ENCODE measurements at regions of chr3 and their contacts with region 1.

Region 1: DNA sequence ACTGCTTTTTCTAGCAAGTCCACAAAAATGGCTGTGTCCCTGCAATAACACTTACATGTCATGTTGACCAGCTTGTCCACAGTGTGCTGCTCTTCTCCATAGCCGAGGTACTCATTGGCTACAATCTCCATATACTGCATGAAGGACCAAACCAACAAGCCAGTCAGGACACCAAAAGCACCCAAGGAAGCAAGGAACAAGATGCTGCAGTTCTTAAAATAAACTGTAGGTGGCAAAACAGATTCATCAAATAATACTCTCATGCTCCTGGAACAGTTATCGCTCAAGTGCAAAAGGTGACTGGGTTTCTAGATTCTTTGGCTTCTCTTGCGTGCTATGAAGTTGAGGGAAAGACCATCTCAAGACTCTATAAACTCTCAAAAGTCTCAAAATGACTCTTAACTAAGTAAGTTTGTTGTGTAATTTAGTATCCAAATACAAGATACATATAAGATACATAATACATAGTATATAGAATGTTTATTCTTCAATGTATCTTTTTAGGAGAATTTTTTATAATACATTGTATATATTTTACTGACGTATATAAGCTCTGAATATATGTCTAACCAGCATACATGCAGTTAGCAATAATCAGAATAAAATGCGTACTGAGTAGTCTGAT is 57.0 kb downstream of the NEK10 start:
- DNase-seq: peak; percentile 8
- H3K4me3 Mint-ChIP-seq: no peak overlapping the region
- H3K27ac Mint-ChIP-seq: no peak overlapping the region
- H3K4me1 Mint-ChIP-seq: no peaks in the 10 kb centered on the region
- H3K27me3 Mint-ChIP-seq: peaks cover 2% of the 10 kb centered on the region

Region 2: DNA sequence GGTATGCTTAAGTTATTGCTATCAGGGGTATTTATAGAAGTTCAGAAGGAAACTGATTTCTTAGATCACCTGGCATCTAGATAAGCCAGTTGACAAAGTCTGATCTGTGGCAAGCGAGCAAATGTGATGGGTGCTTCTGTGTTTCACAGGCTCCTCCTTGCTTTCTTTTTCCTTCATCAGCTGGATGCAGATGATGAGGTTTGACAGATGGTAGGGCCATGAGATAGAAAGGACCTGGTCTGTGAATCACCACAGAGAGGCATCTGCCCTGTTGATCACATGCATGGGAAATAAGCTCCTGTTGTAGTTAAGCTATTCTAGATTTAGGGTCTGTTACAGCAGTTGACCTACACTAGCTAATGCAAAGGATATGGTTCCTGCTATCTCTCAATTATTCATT is 314.9 kb before region 1 on chr3:
- CTCF ChIA-PET with region 1: no interaction called
- intact Hi-C with region 1: no loop called
- DNase-seq: no peak
- H3K4me3 Mint-ChIP-seq: no peak overlapping the region
- H3K27ac Mint-ChIP-seq: no peak overlapping the region
- H3K4me1 Mint-ChIP-seq: no peaks in the 10 kb centered on the region
- H3K27me3 Mint-ChIP-seq: no peaks in the 10 kb centered on the region

Region 3: GRCh38 chr3:27134165-27134796 is 177.9 kb before region 1 on chr3:
- CTCF ChIA-PET with region 1: no interaction called
- intact Hi-C with region 1: loop called (anchors 10 kb)
- DNase-seq: peak; percentile 70
- H3K4me3 Mint-ChIP-seq: no peak overlapping the region
- H3K27ac Mint-ChIP-seq: no peak overlapping the region
- H3K4me1 Mint-ChIP-seq: no peaks in the 10 kb centered on the region
- H3K27me3 Mint-ChIP-seq: peaks cover 1% of the 10 kb centered on the region

Region 4: GRCh38 chr3:27289769-27290413 is 22.3 kb before region 1 on chr3:
- CTCF ChIA-PET with region 1: no interaction called
- intact Hi-C with region 1: no loop called
- DNase-seq: no peak
- H3K4me3 Mint-ChIP-seq: no peak overlapping the region
- H3K27ac Mint-ChIP-seq: no peak overlapping the region
- H3K4me1 Mint-ChIP-seq: no peaks in the 10 kb centered on the region
- H3K27me3 Mint-ChIP-seq: no peaks in the 10 kb centered on the region

Region 5: DNA sequence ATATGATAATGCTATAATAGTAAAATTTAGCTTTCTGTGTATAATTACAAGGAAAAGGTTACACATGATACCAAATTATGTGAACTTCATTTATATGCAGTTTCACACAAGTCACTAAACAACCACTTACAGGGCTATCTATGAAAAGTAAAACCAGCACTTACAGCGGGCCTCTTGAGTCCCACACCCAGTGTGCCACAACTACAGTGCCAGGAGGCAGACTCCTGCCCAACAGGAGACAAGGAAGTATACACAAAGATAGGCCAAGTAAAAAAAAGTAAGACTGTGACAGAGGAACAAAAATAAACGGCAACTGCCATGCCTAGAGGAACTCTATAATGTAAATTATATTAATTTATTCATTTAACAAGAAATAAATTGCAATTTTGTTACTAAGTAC is 110.5 kb after region 1 on chr3:
- CTCF ChIA-PET with region 1: no interaction called
- intact Hi-C with region 1: no loop called
- DNase-seq: no peak
- H3K4me3 Mint-ChIP-seq: no peak overlapping the region
- H3K27ac Mint-ChIP-seq: no peak overlapping the region
- H3K4me1 Mint-ChIP-seq: peaks cover 7% of the 10 kb centered on the region
- H3K27me3 Mint-ChIP-seq: no peaks in the 10 kb centered on the region

Region 6: DNA sequence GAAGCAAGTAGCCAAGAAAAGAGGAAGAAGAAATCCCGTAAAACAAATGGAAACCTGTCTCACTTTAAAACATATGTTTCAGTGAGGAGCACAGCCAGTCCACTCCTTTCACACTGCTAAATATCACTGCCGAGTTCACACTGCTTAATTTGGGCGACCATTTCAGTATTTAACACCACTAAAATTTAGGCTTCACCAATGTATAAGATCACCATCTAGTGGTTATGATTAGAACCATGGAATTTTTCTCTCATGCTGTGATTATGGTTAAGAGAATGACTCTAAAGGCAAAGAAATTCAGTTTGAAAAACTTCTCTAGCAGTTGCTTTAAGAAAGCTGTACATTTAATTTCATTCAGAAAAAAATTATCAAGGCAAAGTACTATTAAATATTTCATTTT is 155.4 kb after region 1 on chr3:
- CTCF ChIA-PET with region 1: interaction called, 8 read pairs
- intact Hi-C with region 1: loop called (anchors 1 kb)
- DNase-seq: no peak
- H3K4me3 Mint-ChIP-seq: no peak overlapping the region
- H3K27ac Mint-ChIP-seq: no peak overlapping the region
- H3K4me1 Mint-ChIP-seq: peaks cover 19% of the 10 kb centered on the region
- H3K27me3 Mint-ChIP-seq: no peaks in the 10 kb centered on the region

Region 7: DNA sequence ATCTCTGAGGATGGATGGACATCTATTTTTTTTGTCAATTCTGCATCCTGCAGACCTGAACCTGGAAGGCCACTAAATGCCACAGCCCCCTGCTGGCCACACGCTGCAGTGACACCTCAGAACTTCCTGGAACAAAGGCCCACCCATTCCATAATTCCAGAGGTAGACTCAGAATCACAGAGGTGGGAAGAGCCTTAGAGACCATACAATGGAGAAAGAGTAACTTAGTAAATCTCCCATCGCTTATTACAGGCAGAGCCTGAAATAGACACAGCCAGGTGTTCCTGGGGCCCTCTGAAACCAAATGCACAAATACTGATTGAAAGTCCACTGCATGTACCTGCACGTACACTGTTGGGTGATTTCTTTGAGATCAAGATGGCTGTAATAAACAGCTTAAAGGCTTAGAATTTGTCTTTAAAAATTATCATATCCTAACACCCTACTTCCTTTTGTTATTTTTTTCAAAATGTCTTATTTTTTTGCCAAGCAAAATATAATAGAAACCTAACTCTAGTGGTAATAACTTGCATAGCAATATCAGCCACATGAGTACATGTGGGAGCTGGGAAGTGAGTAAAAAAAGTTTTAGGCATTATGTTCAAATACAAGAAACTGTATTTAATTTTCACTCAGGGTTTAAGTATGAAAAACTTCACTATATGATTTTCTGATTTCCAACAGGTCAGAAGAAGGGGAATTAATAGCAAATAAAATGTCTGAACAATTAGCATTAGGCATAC is 347.3 kb after region 1 on chr3:
- CTCF ChIA-PET with region 1: interaction called, 3 read pairs
- intact Hi-C with region 1: loop called (anchors 1 kb)
- DNase-seq: peak; percentile 43
- H3K4me3 Mint-ChIP-seq: no peak overlapping the region
- H3K27ac Mint-ChIP-seq: no peak overlapping the region
- H3K4me1 Mint-ChIP-seq: peaks cover 2% of the 10 kb centered on the region
- H3K27me3 Mint-ChIP-seq: no peaks in the 10 kb centered on the region

Region 8: GRCh38 chr3:27669591-27669990 is 357.4 kb after region 1 on chr3:
- CTCF ChIA-PET with region 1: no interaction called
- intact Hi-C with region 1: no loop called
- DNase-seq: no peak
- H3K4me3 Mint-ChIP-seq: no peak overlapping the region
- H3K27ac Mint-ChIP-seq: no peak overlapping the region
- H3K4me1 Mint-ChIP-seq: peaks cover 6% of the 10 kb centered on the region
- H3K27me3 Mint-ChIP-seq: no peaks in the 10 kb centered on the region